Astrocyte of the cerebellum (primary cell): ENCODE measurements at regions of chr19 and their contacts with region 1.

Region 1: GRCh38 chr19:1279782-1280341 is 4.5 kb downstream of the FAM174C start:
- DNase-seq: peak; percentile 71
- H3K4me3 ChIP-seq: no peak overlapping the region
- CTCF ChIP-seq: peak; percentile 97

Region 2: GRCh38 chr19:1082172-1082927 is 197.5 kb before region 1 on chr19:
- in situ Hi-C with region 1: no loop called
- DNase-seq: no peak
- H3K4me3 ChIP-seq: peak overlapping the region; percentile 12
- CTCF ChIP-seq: no peak

Region 3: DNA sequence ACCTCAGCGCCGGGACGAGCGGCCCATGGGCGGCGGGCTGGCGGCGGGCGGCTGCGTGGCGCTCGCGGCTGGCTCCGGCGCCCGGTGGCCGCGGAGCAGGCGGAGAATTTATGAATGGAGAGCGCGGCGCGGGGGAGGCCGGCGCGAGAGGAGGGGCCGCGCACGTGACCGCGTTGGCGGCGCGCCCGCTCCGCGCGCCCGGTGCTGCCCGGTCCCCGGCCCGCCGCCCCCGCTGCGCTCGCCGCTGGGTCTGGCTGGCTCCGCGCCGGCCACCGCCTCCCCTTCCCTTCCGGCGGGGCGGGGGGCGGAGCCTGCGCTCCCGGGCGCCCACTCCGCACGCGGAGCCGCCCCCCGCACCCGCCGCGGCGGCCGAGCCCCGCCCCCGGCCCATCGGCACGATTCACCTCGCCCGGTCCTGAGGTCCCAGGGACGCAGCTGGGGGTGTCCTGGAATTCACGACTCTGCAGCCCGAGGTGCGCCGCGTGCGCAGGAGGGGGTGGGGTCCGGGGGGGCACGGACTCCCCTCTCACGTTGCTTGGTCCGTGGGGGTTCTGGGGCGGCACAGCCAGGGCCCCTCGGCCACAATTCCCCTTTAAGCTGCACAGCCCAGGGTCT is 42.0 kb before region 1 on chr19 and contains the start of gene CBARP:
- in situ Hi-C with region 1: no loop called
- DNase-seq: no peak
- H3K4me3 ChIP-seq: peak within 1 kb of the TSS; percentile 60
- CTCF ChIP-seq: no peak

Region 4: GRCh38 chr19:1411255-1412191 is 131.7 kb after region 1 on chr19:
- in situ Hi-C with region 1: loop called (anchors 5 kb)
- DNase-seq: no peak
- H3K4me3 ChIP-seq: peak overlapping the region; percentile 14
- CTCF ChIP-seq: no peak